Gastrocnemius medialis (tissue), 4 donors: ENCODE measurements at regions of chr4 and their contacts with region 1.

Region 1: GRCh38 chr4:158768555-158769174 is at the start of gene FNIP2:
- DNase-seq: peak; percentile 74 to 83
- ATAC-seq: peak; percentile 82 to 87
- H3K4me3 ChIP-seq: peak within 1 kb of the TSS; percentile 78 to 95 (median 86)
- H3K27ac ChIP-seq: peak within 1 kb of the TSS; percentile 91 to 97 (median 95)
- H3K4me1 ChIP-seq: peaks cover 38 to 46% of the 10 kb centered on the region in 2 donors
- H3K27me3 ChIP-seq: no peaks in the 10 kb centered on the region
- CTCF ChIP-seq: no peak
- POLR2A ChIP-seq: peak; percentile 83 to 86
- total RNA-seq, gene FNIP2: 9.9 to 32.8 (median 22.2) TPM

Region 2: DNA sequence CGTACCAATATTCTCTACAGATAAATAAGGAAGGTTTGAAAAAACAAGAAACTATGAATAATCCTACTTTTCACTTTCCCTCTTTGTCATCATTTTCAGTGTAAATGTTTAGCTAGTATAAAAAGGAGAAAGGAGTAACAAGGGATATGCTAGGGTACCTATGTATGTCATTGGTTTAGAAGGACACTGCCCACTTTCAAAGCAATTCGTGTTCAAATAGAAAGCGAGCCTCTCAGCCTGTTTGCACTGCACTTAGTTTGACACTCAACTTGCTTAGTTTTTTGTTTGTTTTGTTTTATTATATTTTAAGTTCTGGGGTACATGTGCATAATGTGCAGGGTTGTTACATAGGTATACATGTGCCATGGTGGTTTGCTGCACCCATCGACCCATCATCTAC is 268.6 kb before region 1 on chr4:
- in situ Hi-C with region 1: no loop called
- intact Hi-C with region 1: no loop called
- DNase-seq: no peak
- ATAC-seq: no peak
- H3K4me3 ChIP-seq: no peak overlapping the region
- H3K27ac ChIP-seq: no peak overlapping the region
- H3K4me1 ChIP-seq: no peaks in the 10 kb centered on the region
- H3K27me3 ChIP-seq: no peaks in the 10 kb centered on the region
- CTCF ChIP-seq: no peak
- POLR2A ChIP-seq: no peak

Region 3: GRCh38 chr4:158599150-158599549 is 169.5 kb before region 1 on chr4:
- in situ Hi-C with region 1: no loop called
- intact Hi-C with region 1: no loop called
- DNase-seq: no peak
- ATAC-seq: no peak
- H3K4me3 ChIP-seq: no peak overlapping the region
- H3K27ac ChIP-seq: no peak overlapping the region
- H3K4me1 ChIP-seq: no peaks in the 10 kb centered on the region
- H3K27me3 ChIP-seq: no peaks in the 10 kb centered on the region
- CTCF ChIP-seq: no peak
- POLR2A ChIP-seq: no peak

Region 4: GRCh38 chr4:158722917-158723793 is 45.5 kb before region 1 on chr4 and contains the start of gene PPID:
- in situ Hi-C with region 1: no loop called
- intact Hi-C with region 1: loop called (anchors 1 kb)
- DNase-seq: peak; percentile 68 to 81
- ATAC-seq: peak; percentile 92 to 95
- H3K4me3 ChIP-seq: peak within 1 kb of the TSS; percentile 72 to 95 (median 94)
- H3K27ac ChIP-seq: peak within 1 kb of the TSS; percentile 90 to 96 (median 92)
- H3K4me1 ChIP-seq: peaks cover 17 to 30% of the 10 kb centered on the region in 2 donors
- H3K27me3 ChIP-seq: no peaks in the 10 kb centered on the region
- CTCF ChIP-seq: no peak
- POLR2A ChIP-seq: peak; percentile 87
- total RNA-seq, gene PPID: 30.1 to 81.8 (median 40.6) TPM

Region 5: GRCh38 chr4:158809611-158810486 is 41.2 kb after region 1 on chr4:
- in situ Hi-C with region 1: no loop called
- intact Hi-C with region 1: loop called (anchors 2 kb)
- DNase-seq: peak; percentile 37 to 58
- ATAC-seq: peak; percentile 73 to 80
- H3K4me3 ChIP-seq: peak overlapping the region; percentile 14 to 23 (median 16)
- H3K27ac ChIP-seq: peak overlapping the region; percentile 80 to 92 (median 90)
- H3K4me1 ChIP-seq: peaks cover 79 to 83% of the 10 kb centered on the region in 2 donors
- H3K27me3 ChIP-seq: no peaks in the 10 kb centered on the region
- CTCF ChIP-seq: no peak
- POLR2A ChIP-seq: peak; percentile 15 to 27

Region 6: GRCh38 chr4:158845311-158846041 is 76.8 kb after region 1 on chr4:
- in situ Hi-C with region 1: no loop called
- intact Hi-C with region 1: loop called (anchors 5 kb)
- DNase-seq: no peak
- ATAC-seq: no peak
- H3K4me3 ChIP-seq: no peak overlapping the region
- H3K27ac ChIP-seq: no peak overlapping the region
- H3K4me1 ChIP-seq: peaks cover 5 to 19% of the 10 kb centered on the region in 2 donors
- H3K27me3 ChIP-seq: no peaks in the 10 kb centered on the region
- CTCF ChIP-seq: no peak
- POLR2A ChIP-seq: no peak

Region 7: GRCh38 chr4:158914218-158914617 is 145.6 kb after region 1 on chr4:
- in situ Hi-C with region 1: no loop called
- intact Hi-C with region 1: no loop called
- DNase-seq: no peak
- ATAC-seq: peak; percentile 14 to 58
- H3K4me3 ChIP-seq: no peak overlapping the region
- H3K27ac ChIP-seq: no peak overlapping the region
- H3K4me1 ChIP-seq: peaks cover 12 to 17% of the 10 kb centered on the region in 2 donors
- H3K27me3 ChIP-seq: no peaks in the 10 kb centered on the region
- CTCF ChIP-seq: no peak
- POLR2A ChIP-seq: no peak